ENCODE measurements at regions of chr6 and their contacts with region 1.

Region 1: GRCh38 chr6:117547688-117548621 is 54.4 kb downstream of the GOPC start:
- DNase-seq: peak in 32 of 35 experiments; percentile 11 to 61 (median 28)
- ATAC-seq: peak; percentile 50 to 54 (median 53)
- H3K4me3 ChIP-seq: peak overlapping the region; percentile 70 to 74
- H3K4me3 Mint-ChIP-seq: peak overlapping the region; percentile 82 to 86 (median 83)
- H3K27ac ChIP-seq: peak overlapping the region; percentile 73
- H3K27ac Mint-ChIP-seq: peak overlapping the region; percentile 93 to 96
- H3K4me1 ChIP-seq: peaks cover 22 to 26% of the 10 kb centered on the region in 2 experiments
- H3K4me1 Mint-ChIP-seq: peaks cover 43 to 46% (median 44%) of the 10 kb centered on the region in 3 donors
- H3K27me3 ChIP-seq: no peaks in the 10 kb centered on the region
- H3K27me3 Mint-ChIP-seq: peaks cover 0 to 2% of the 10 kb centered on the region in 2 donors

Region 2: GRCh38 chr6:117482240-117483003 is 65.5 kb before region 1 on chr6 and contains the start of gene DCBLD1:
- CTCF ChIA-PET with region 1: interaction called, 5 to 14 read pairs
- POLR2A ChIA-PET with region 1: no interaction called
- DNase-seq: peak in 32 of 35 experiments; percentile 2 to 64 (median 32)
- ATAC-seq: peak; percentile 71 to 77 (median 74)
- H3K4me3 ChIP-seq: peak within 1 kb of the TSS; percentile 85 to 86
- H3K4me3 Mint-ChIP-seq: peak within 1 kb of the TSS; percentile 86 to 93 (median 86)
- H3K27ac ChIP-seq: no peak within 1 kb of the TSS
- H3K27ac Mint-ChIP-seq: peak within 1 kb of the TSS; percentile 37 to 41
- H3K4me1 ChIP-seq: peaks cover 5 to 21% of the 10 kb centered on the region in 2 experiments
- H3K4me1 Mint-ChIP-seq: peaks cover 17 to 19% (median 18%) of the 10 kb centered on the region in 3 donors
- H3K27me3 ChIP-seq: peaks cover 12 to 17% of the 10 kb centered on the region in 2 experiments
- H3K27me3 Mint-ChIP-seq: peaks cover 38 to 47% of the 10 kb centered on the region in 2 donors
- total RNA-seq, gene DCBLD1: 2.2 to 7.3 (median 4.2) TPM

Region 3: GRCh38 chr6:117602151-117602898 is 54.4 kb after region 1 on chr6 and contains the start of gene GOPC:
- CTCF ChIA-PET with region 1: interaction called in 1 of 2 experiments, 12 read pairs
- POLR2A ChIA-PET with region 1: interaction called, 3 to 5 read pairs
- DNase-seq: peak; percentile 83 to 99 (median 94)
- ATAC-seq: peak; percentile 95 to 97 (median 96)
- H3K4me3 ChIP-seq: peak within 1 kb of the TSS; percentile 90 to 100
- H3K4me3 Mint-ChIP-seq: peak within 1 kb of the TSS; percentile 94 to 100 (median 98)
- H3K27ac ChIP-seq: peak within 1 kb of the TSS; percentile 83
- H3K27ac Mint-ChIP-seq: peak within 1 kb of the TSS; percentile 99
- H3K4me1 ChIP-seq: peaks cover 17 to 25% of the 10 kb centered on the region in 2 experiments
- H3K4me1 Mint-ChIP-seq: peaks cover 44 to 51% (median 49%) of the 10 kb centered on the region in 3 donors
- H3K27me3 ChIP-seq: no peaks in the 10 kb centered on the region
- H3K27me3 Mint-ChIP-seq: peaks cover 0 to under 1% of the 10 kb centered on the region in 2 donors
- total RNA-seq, gene GOPC: 20.8 to 30.2 (median 27.5) TPM

Region 4: GRCh38 chr6:118372413-118372812 is 824.5 kb after region 1 on chr6:
- CTCF ChIA-PET with region 1: no interaction called
- POLR2A ChIA-PET with region 1: no interaction called
- DNase-seq: no peak
- ATAC-seq: no peak
- H3K4me3 ChIP-seq: no peak overlapping the region
- H3K4me3 Mint-ChIP-seq: no peak overlapping the region
- H3K27ac ChIP-seq: no peak overlapping the region
- H3K27ac Mint-ChIP-seq: no peak overlapping the region
- H3K4me1 ChIP-seq: no peaks in the 10 kb centered on the region
- H3K4me1 Mint-ChIP-seq: no peaks in the 10 kb centered on the region
- H3K27me3 ChIP-seq: no peaks in the 10 kb centered on the region
- H3K27me3 Mint-ChIP-seq: no peaks in the 10 kb centered on the region

Measured in T-cell (primary cell).